Activated naive CD4-positive, alpha-beta T cell treated with anti-CD3 and anti-CD28 coated beads for 36 hours (primary cell): ENCODE measurements at regions of chr1 and their contacts with region 1.

Region 1: DNA sequence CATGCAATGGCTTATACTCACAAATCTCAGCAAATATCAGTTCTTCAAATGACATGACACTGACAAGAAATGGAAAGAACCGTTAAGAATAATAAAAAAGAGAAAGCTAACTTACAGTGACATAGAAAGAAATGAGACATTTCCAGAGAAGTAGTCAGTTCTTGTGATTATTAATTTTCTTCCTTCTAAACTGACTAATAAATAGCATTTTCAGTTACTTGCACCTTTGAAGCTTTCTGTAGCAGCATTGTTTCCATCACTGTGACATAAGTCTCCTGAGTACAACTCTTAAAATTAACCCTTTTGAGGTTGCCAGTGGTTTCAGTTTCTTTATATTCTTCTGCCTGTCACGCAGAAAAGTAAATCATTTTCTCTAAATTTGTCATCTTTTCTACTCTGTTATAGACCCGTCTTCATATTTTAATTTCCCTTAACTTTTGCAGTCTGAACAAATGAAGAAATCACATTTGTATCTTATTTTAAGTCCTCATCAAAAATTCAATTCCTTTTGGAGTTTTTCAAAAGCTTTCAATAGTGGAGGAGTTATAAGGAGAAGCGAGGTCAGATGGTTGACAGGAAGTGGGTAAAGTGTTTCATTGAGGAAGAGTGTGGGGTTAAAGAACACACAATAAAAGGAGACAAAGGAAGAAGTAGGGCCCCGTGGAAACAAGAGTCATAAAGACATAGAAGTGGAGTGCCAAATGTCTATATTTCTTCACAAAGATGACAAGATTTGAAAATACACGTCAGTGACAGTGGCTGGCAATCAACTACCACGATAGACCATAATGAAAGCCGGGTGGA is 57.9 kb upstream of the S1PR1 start:
- DNase-seq: peak; percentile 66
- H3K4me3 Mint-ChIP-seq: peak overlapping the region; percentile 63
- H3K27ac Mint-ChIP-seq: peak overlapping the region; percentile 100
- H3K4me1 Mint-ChIP-seq: peaks cover 82% of the 10 kb centered on the region
- H3K27me3 Mint-ChIP-seq: no peaks in the 10 kb centered on the region

Region 2: DNA sequence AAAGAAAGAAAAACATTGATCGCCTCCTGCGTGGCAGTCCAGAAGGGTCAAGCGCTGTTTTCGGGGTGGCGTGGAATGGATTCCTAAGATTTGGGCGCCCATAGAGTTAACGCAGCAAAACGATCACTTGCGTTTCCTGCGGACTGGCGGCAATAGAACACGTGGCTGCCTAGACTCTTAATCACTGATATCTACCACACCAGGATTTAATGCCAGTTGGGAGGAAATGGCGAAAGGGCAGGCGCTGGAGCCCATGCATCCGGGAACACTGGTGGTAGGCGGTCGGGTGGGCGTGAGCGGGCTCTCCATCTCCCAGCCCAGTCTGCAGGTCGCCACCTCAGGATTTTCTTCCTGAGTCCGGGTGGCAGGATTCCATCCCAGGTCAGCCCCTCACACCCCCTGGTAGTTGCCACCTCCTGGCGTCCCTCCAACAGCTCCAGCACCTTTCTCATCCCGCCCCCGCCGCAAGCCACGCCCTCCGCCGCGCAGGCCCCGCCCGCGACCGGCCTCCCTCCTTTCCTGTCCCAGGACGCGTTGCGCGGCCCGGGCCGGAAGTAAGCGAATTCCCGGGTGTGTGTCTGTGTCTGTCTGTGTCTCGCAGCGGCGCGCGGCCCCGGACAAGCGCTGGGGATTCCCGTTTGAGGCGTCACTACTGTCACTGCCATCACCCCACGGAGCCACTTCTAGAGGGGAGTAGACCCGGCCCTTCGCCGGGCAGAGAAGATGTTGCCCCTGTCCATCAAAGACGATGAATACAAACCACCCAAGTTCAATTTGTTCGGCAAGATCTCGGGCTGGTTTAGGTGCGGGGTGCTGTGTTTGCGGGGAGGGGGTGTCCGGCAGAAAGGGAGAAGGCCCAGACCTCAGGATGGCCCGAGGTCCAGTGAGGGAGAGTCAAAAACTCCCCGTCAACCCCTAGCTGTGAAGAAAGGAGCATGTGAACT is 283.1 kb before region 1 on chr1 and contains the start of gene SLC30A7:
- CTCF ChIA-PET with region 1: interaction called, 3 read pairs
- intact Hi-C with region 1: loop called (anchors 1 kb)
- DNase-seq: peak; percentile 98
- H3K4me3 Mint-ChIP-seq: peak within 1 kb of the TSS; percentile 100
- H3K27ac Mint-ChIP-seq: peak within 1 kb of the TSS; percentile 100
- H3K4me1 Mint-ChIP-seq: peaks cover 37% of the 10 kb centered on the region
- H3K27me3 Mint-ChIP-seq: no peaks in the 10 kb centered on the region
- total RNA-seq, gene SLC30A7: 32.4 to 32.6 TPM

Region 3: GRCh38 chr1:100955322-100955721 is 223.6 kb before region 1 on chr1:
- CTCF ChIA-PET with region 1: no interaction called
- intact Hi-C with region 1: loop called (anchors 1 kb)
- DNase-seq: no peak
- H3K4me3 Mint-ChIP-seq: no peak overlapping the region
- H3K27ac Mint-ChIP-seq: peak overlapping the region; percentile 65
- H3K4me1 Mint-ChIP-seq: peaks cover 62% of the 10 kb centered on the region
- H3K27me3 Mint-ChIP-seq: no peaks in the 10 kb centered on the region

Region 4: GRCh38 chr1:101112051-101112780 is 66.7 kb before region 1 on chr1:
- CTCF ChIA-PET with region 1: no interaction called
- intact Hi-C with region 1: loop called (anchors 1 kb)
- DNase-seq: peak; percentile 75
- H3K4me3 Mint-ChIP-seq: peak overlapping the region; percentile 54
- H3K27ac Mint-ChIP-seq: peak overlapping the region; percentile 88
- H3K4me1 Mint-ChIP-seq: peaks cover 56% of the 10 kb centered on the region
- H3K27me3 Mint-ChIP-seq: no peaks in the 10 kb centered on the region

Region 5: DNA sequence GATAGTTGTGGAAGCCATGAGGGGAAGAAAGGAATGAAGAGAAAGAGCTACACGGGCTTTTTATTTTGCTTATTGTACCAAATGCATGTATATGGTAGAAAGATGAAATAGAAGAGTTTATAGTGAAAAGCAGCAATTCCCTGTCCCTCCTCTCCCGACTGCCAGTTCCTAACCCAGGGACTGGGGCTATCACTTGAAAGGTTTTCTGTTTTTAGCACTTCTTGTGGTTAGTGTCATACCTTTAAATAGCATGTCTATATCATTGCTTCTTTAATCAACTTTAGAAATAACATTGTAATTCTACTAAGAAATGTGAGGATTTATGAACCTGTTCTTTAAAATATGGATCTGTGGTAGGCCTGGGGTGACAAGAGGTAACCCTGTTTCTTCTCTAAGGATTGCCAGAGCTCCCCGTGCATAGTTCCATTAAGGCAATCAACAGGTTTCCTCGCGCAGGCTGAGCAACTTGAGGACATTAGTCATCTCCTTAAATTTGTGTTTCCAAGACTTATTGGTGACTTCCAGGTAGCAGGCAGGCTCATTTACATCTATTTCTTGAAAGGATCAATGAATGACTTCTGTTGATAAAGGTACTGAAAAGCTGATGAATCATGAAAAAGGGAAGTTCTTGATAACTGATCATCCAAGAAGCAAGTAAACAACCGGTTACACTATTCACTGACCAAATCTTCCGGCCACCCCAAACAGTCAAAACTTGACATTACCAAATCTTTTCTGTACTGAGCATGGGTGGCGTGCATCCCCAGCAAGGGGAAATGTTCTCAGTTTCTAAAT is 20.1 kb after region 1 on chr1:
- CTCF ChIA-PET with region 1: interaction called, 7 read pairs
- intact Hi-C with region 1: loop called (anchors 1 kb)
- DNase-seq: peak; percentile 82
- H3K4me3 Mint-ChIP-seq: no peak overlapping the region
- H3K27ac Mint-ChIP-seq: peak overlapping the region; percentile 79
- H3K4me1 Mint-ChIP-seq: peaks cover 28% of the 10 kb centered on the region
- H3K27me3 Mint-ChIP-seq: no peaks in the 10 kb centered on the region

Region 6: DNA sequence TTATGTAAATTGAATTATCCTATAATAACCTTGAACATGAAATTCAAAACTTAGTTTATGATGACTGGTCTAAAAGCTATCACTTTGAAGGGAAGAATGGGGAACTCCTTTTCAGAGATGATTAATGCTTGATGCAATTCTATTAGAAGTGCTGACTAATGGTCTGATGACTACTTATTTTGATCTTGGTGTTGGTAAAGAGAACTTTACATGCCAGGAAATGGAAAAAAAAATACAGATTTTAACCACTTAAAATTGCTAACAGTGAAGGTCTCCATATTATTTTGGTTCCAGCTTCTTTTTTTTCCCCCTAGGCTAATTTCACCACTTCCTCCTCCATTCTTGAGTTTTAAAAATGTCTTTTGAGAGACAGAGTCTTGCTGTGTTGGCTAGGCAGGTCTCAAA is 80.9 kb after region 1 on chr1:
- CTCF ChIA-PET with region 1: no interaction called
- intact Hi-C with region 1: loop called (anchors 1 kb)
- DNase-seq: no peak
- H3K4me3 Mint-ChIP-seq: no peak overlapping the region
- H3K27ac Mint-ChIP-seq: peak overlapping the region; percentile 77
- H3K4me1 Mint-ChIP-seq: peaks cover 67% of the 10 kb centered on the region
- H3K27me3 Mint-ChIP-seq: no peaks in the 10 kb centered on the region